A549 (cell line): ENCODE measurements at regions of chr9 and their contacts with region 1.

Region 1: DNA sequence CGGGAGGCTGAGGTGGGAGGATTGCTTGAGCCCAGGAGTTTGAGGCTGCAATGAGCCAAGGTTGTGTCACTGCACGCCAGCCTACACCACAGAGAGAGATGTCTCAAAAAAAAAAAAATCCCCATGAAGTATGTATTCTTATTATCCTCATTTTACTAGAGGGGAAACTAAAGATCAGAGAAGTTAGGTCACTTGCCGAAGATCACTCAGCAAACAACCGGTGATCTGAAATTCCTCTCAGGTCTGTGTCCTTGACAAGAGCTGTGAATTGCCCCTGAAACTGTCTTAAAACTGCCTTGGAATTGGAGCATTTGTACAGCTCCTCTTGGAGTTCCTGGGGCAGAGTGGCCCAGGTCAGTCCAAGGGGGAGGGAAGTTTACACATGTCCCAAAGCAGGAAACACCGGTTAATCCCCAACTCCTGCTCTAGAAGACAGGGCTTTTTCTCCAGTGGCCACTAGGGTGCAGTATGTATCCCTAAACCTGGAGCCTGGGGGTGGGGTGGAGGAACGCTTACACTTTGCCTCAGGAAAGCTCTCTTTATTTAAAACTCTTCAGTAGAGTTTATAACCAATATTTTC is 27.6 kb downstream of the AQP7 start:
- DNase-seq: peak; percentile 77 to 78
- ATAC-seq: peak; percentile 77 to 88
- H3K4me3 ChIP-seq: no peak overlapping the region
- H3K27ac ChIP-seq: 0 out of 6 replicates have a peak overlapping the region, but pooled peaks of 1 of the 2 experiments have one; percentile 24
- H3K4me1 ChIP-seq: peaks cover 4% of the 10 kb centered on the region; the same call in 1 of the 3 replicates
- CTCF ChIP-seq: peak; percentile 90
- EP300 ChIP-seq: no peak
- POLR2A ChIP-seq: no peak
- RAD21 ChIP-seq: peak; percentile 80 to 84

Region 2: GRCh38 chr9:33151007-33151557 is 223.6 kb before region 1 on chr9:
- CTCF ChIA-PET with region 1: no interaction called
- POLR2A ChIA-PET with region 1: no interaction called
- DNase-seq: peak in 1 of 2 experiments; percentile 53
- ATAC-seq: peak; percentile 87 to 90
- H3K4me3 ChIP-seq: peak overlapping the region; percentile 19; the same call in 2 of the 3 replicates
- H3K27ac ChIP-seq: peak overlapping the region; percentile 73 to 87
- H3K4me1 ChIP-seq: peaks cover 98% of the 10 kb centered on the region
- CTCF ChIP-seq: no peak
- EP300 ChIP-seq: no peak
- POLR2A ChIP-seq: no peak
- RAD21 ChIP-seq: no peak

Region 3: DNA sequence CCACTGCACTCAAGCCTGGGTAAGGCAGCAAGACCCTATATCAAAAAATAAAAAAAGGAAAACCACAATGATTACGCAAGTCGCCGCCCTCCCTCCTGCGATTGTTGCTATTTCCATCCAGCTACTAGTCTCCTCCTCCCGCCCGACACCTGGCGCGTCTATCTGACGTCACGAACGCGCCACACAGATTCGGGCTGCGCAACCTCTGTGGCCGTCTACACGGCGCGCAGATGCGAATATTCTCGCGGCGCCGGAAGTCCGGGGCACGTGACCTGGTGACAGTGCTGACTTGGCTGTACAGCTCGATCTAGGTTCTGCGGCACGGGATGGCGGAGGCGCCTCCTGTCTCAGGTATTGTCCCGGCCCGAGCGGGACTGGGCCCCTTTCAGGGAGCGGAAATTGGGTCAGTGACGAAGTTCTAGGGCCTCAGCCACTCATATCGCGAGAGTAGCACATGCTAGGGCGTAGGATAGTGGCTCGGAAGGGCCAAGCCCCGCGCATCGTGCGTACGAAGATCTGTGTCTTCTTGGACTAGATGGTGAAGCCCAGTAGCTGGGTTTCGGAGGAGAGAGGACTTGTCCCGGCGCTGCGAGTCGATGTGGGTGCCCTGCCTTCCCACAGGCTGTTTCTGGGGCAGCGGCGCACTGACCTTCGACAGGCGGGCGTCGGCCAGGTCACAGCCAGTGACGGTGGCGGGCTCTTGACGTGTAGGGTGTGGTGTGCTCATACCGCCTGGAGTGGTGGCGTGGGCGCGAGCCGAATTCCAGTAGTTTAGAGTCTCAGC is 84.3 kb before region 1 on chr9 and contains the start of gene NFX1:
- CTCF ChIA-PET with region 1: interaction called, 32 read pairs
- POLR2A ChIA-PET with region 1: no interaction called
- DNase-seq: peak; percentile 95 to 99
- ATAC-seq: peak; percentile 86 to 94
- H3K4me3 ChIP-seq: peak within 1 kb of the TSS; percentile 66
- H3K27ac ChIP-seq: peak within 1 kb of the TSS; percentile 91 to 99
- H3K4me1 ChIP-seq: peaks cover 48% of the 10 kb centered on the region
- CTCF ChIP-seq: no peak
- EP300 ChIP-seq: no peak
- POLR2A ChIP-seq: peak; percentile 71
- RAD21 ChIP-seq: no peak
- polyA plus RNA-seq, gene NFX1: 41.1 and 41.2 TPM in 2 replicates

Region 4: GRCh38 chr9:33350310-33350709 is 24.4 kb before region 1 on chr9:
- CTCF ChIA-PET with region 1: interaction called, 36 read pairs
- POLR2A ChIA-PET with region 1: no interaction called
- DNase-seq: peak; percentile 50 to 74
- ATAC-seq: peak; percentile 64 to 81; a peak in 4 of 6 replicates
- H3K4me3 ChIP-seq: no peak overlapping the region
- H3K27ac ChIP-seq: no peak overlapping the region; a peak in 1 of 6 replicates
- H3K4me1 ChIP-seq: peaks cover 12% of the 10 kb centered on the region; the same call in 2 of the 3 replicates
- CTCF ChIP-seq: no peak
- EP300 ChIP-seq: no peak
- POLR2A ChIP-seq: no peak
- RAD21 ChIP-seq: no peak

Region 5: DNA sequence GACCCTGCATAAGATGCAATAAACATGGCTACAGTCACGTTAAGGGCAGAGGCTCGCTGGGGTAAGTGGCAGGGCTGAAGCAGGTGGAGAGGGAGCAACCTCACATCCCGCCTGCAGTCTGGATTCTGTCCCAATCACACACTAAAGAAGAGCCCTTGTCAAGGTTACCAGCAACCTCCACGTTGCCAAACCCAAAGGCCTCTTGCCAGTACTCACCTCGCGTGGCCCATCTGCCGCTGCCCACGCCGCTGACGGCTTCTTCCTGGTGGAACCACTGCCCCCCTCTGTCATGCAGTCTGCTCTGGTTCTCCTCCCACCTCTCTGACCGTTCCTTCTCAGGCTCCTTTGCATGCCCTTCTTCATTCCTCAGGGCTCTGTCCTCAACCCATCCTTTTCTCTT is 18.9 kb after region 1 on chr9:
- CTCF ChIA-PET with region 1: interaction called, 24 read pairs
- POLR2A ChIA-PET with region 1: no interaction called
- DNase-seq: no peak
- ATAC-seq: no peak
- H3K4me3 ChIP-seq: no peak overlapping the region
- H3K27ac ChIP-seq: no peak overlapping the region; a peak in 1 of 6 replicates
- H3K4me1 ChIP-seq: peaks cover 32% of the 10 kb centered on the region
- CTCF ChIP-seq: no peak
- EP300 ChIP-seq: no peak
- POLR2A ChIP-seq: no peak
- RAD21 ChIP-seq: no peak

Region 6: GRCh38 chr9:33415501-33416038 is 40.8 kb after region 1 on chr9:
- CTCF ChIA-PET with region 1: interaction called, 48 read pairs
- POLR2A ChIA-PET with region 1: no interaction called
- DNase-seq: peak; percentile 89 to 98
- ATAC-seq: peak; percentile 91 to 92
- H3K4me3 ChIP-seq: no peak overlapping the region
- H3K27ac ChIP-seq: peak overlapping the region; percentile 77 to 87
- H3K4me1 ChIP-seq: peaks cover 46% of the 10 kb centered on the region
- CTCF ChIP-seq: peak; percentile 91
- EP300 ChIP-seq: peak; percentile 83 to 91; a peak in 4 of 5 replicates
- POLR2A ChIP-seq: no peak
- RAD21 ChIP-seq: peak; percentile 66 to 83

Region 7: GRCh38 chr9:33452828-33453271 is 78.1 kb after region 1 on chr9:
- CTCF ChIA-PET with region 1: interaction called, 46 read pairs
- POLR2A ChIA-PET with region 1: no interaction called
- DNase-seq: peak; percentile 80 to 88
- ATAC-seq: peak; percentile 88 to 92
- H3K4me3 ChIP-seq: no peak overlapping the region
- H3K27ac ChIP-seq: peak overlapping the region; percentile 60 to 83
- H3K4me1 ChIP-seq: peaks cover 23% of the 10 kb centered on the region
- CTCF ChIP-seq: peak; percentile 87
- EP300 ChIP-seq: no peak
- POLR2A ChIP-seq: no peak
- RAD21 ChIP-seq: peak; percentile 79 to 82

Region 8: GRCh38 chr9:33473643-33474352 is 99.1 kb after region 1 on chr9 and contains the start of gene NOL6:
- CTCF ChIA-PET with region 1: interaction called, 147 read pairs
- POLR2A ChIA-PET with region 1: interaction called, 4 read pairs
- DNase-seq: peak; percentile 97 to 99
- ATAC-seq: peak; percentile 99 to 100
- H3K4me3 ChIP-seq: peak within 1 kb of the TSS; percentile 88
- H3K27ac ChIP-seq: peak within 1 kb of the TSS; percentile 75 to 88
- H3K4me1 ChIP-seq: peaks cover 14% of the 10 kb centered on the region
- CTCF ChIP-seq: no peak
- EP300 ChIP-seq: no peak
- POLR2A ChIP-seq: peak; percentile 70
- RAD21 ChIP-seq: no peak
- polyA plus RNA-seq, gene NOL6: 49.5 and 56.6 TPM in 2 replicates